CD4-positive, alpha-beta memory T cell (primary cell): ENCODE measurements at regions of chr6 and their contacts with region 1.

Region 1: GRCh38 chr6:119110601-119111548 is 32.4 kb upstream of the FAM184A start:
- DNase-seq: peak; percentile 46 to 67 (median 65)
- H3K4me3 ChIP-seq: no peak overlapping the region
- H3K4me3 Mint-ChIP-seq: peak overlapping the region in 2 of 8 donors; percentile 13 to 27
- H3K27ac ChIP-seq: no peak overlapping the region
- H3K27ac Mint-ChIP-seq: no peak overlapping the region
- H3K4me1 ChIP-seq: no peaks in the 10 kb centered on the region
- H3K4me1 Mint-ChIP-seq: peaks cover 7 to 12% (median 9%) of the 10 kb centered on the region in 4 donors
- H3K27me3 ChIP-seq: no peaks in the 10 kb centered on the region
- H3K27me3 Mint-ChIP-seq: peaks cover 0 to 1% of the 10 kb centered on the region in 2 donors

Region 2: GRCh38 chr6:118283766-118284165 is 827.1 kb before region 1 on chr6:
- CTCF ChIA-PET with region 1: interaction called, 37 read pairs
- POLR2A ChIA-PET with region 1: no interaction called
- intact Hi-C with region 1: loop called (anchors 1 kb)
- DNase-seq: peak; percentile 48 to 60 (median 56)
- H3K4me3 ChIP-seq: no peak overlapping the region
- H3K4me3 Mint-ChIP-seq: no peak overlapping the region
- H3K27ac ChIP-seq: no peak overlapping the region
- H3K27ac Mint-ChIP-seq: no peak overlapping the region
- H3K4me1 ChIP-seq: peaks cover 3% of the 10 kb centered on the region
- H3K4me1 Mint-ChIP-seq: peaks cover 0 to 1% (median 0%) of the 10 kb centered on the region in 4 donors
- H3K27me3 ChIP-seq: no peaks in the 10 kb centered on the region
- H3K27me3 Mint-ChIP-seq: peaks cover 5 to 7% of the 10 kb centered on the region in 2 donors

Region 3: DNA sequence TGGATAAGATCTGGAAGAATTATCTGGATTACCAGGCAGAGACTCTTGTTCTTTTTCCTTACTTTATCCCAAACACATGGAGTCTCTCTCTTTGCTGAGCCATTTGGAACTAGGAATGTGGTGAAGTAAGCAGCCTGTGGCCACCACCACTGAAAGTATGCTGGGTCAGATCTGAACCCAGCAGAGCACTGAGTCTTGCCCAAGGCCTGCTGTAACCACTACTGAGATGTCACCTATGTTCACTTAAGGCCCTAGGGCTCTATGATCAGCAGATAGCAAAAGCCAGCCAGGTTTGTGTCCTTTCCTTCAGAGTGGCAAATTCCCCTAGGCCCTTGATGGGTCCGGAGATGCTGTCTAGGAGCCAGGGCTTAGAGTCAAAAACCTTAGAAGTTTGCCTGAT is 666.1 kb before region 1 on chr6:
- CTCF ChIA-PET with region 1: no interaction called
- POLR2A ChIA-PET with region 1: no interaction called
- intact Hi-C with region 1: no loop called
- DNase-seq: no peak
- H3K4me3 ChIP-seq: no peak overlapping the region
- H3K4me3 Mint-ChIP-seq: no peak overlapping the region
- H3K27ac ChIP-seq: no peak overlapping the region
- H3K27ac Mint-ChIP-seq: no peak overlapping the region
- H3K4me1 ChIP-seq: no peaks in the 10 kb centered on the region
- H3K4me1 Mint-ChIP-seq: no peaks in the 10 kb centered on the region
- H3K27me3 ChIP-seq: no peaks in the 10 kb centered on the region
- H3K27me3 Mint-ChIP-seq: no peaks in the 10 kb centered on the region

Region 4: GRCh38 chr6:118800394-118801071 is 310.3 kb before region 1 on chr6:
- CTCF ChIA-PET with region 1: interaction called, 7 read pairs
- POLR2A ChIA-PET with region 1: no interaction called
- intact Hi-C with region 1: loop called (anchors 1 kb)
- DNase-seq: peak; percentile 87 to 90 (median 87)
- H3K4me3 ChIP-seq: no peak overlapping the region
- H3K4me3 Mint-ChIP-seq: peak overlapping the region; percentile 52 to 86 (median 65)
- H3K27ac ChIP-seq: peak overlapping the region; percentile 11
- H3K27ac Mint-ChIP-seq: peak overlapping the region; percentile 71 to 96 (median 93)
- H3K4me1 ChIP-seq: peaks cover 30% of the 10 kb centered on the region
- H3K4me1 Mint-ChIP-seq: peaks cover 29 to 53% (median 39%) of the 10 kb centered on the region in 4 donors
- H3K27me3 ChIP-seq: no peaks in the 10 kb centered on the region
- H3K27me3 Mint-ChIP-seq: no peaks in the 10 kb centered on the region

Region 5: DNA sequence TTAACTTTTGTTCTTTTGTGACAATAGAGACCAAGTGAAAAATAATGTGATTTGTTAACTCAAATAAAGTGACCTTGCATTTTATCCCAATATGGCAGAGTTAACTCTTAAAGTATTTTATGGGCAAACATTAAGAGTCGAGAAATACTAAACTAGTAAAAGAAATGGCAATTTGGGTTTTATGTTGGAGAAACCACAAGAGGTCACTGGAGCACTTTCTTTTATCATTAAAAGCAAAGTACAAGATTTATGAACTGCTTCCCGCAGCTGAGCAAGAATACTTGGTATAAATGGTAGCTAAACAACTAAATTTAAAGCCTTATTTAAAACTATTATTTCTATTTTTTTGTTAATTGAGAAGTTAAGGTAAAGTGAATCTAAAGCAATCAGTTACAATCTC is 142.5 kb before region 1 on chr6:
- CTCF ChIA-PET with region 1: interaction called, 245 read pairs
- POLR2A ChIA-PET with region 1: interaction called, 10 read pairs
- intact Hi-C with region 1: loop called (anchors 1 kb)
- DNase-seq: peak in 3 of 5 donors; percentile 2 to 9 (median 2)
- H3K4me3 ChIP-seq: no peak overlapping the region
- H3K4me3 Mint-ChIP-seq: no peak overlapping the region
- H3K27ac ChIP-seq: no peak overlapping the region
- H3K27ac Mint-ChIP-seq: no peak overlapping the region
- H3K4me1 ChIP-seq: no peaks in the 10 kb centered on the region
- H3K4me1 Mint-ChIP-seq: no peaks in the 10 kb centered on the region
- H3K27me3 ChIP-seq: no peaks in the 10 kb centered on the region
- H3K27me3 Mint-ChIP-seq: no peaks in the 10 kb centered on the region

Region 6: DNA sequence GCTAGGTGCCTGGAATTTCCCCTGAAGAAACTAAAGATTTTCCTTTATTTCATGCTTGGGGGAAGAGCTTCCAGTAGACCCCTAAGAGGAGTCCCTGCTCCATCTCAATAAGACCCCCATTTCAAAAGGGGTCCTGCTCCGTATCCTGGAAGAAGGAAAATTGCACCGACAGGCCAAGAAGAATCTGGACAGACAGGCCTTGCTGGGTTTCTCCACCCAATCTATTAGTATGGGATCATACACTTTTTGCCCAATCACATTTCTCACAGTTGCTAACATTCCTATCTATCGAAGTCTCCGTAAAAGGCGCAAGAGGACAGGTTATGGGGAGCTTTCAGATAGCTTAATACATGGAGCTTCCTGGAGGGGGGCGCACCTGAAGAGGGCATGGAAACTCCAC is 11.5 kb before region 1 on chr6:
- CTCF ChIA-PET with region 1: interaction called, 18 read pairs
- POLR2A ChIA-PET with region 1: no interaction called
- intact Hi-C with region 1: no loop called
- DNase-seq: no peak
- H3K4me3 ChIP-seq: no peak overlapping the region
- H3K4me3 Mint-ChIP-seq: no peak overlapping the region
- H3K27ac ChIP-seq: no peak overlapping the region
- H3K27ac Mint-ChIP-seq: no peak overlapping the region
- H3K4me1 ChIP-seq: no peaks in the 10 kb centered on the region
- H3K4me1 Mint-ChIP-seq: peaks cover 0 to 8% (median 4%) of the 10 kb centered on the region in 4 donors
- H3K27me3 ChIP-seq: no peaks in the 10 kb centered on the region
- H3K27me3 Mint-ChIP-seq: peaks cover 1 to 3% of the 10 kb centered on the region in 2 donors

Region 7: DNA sequence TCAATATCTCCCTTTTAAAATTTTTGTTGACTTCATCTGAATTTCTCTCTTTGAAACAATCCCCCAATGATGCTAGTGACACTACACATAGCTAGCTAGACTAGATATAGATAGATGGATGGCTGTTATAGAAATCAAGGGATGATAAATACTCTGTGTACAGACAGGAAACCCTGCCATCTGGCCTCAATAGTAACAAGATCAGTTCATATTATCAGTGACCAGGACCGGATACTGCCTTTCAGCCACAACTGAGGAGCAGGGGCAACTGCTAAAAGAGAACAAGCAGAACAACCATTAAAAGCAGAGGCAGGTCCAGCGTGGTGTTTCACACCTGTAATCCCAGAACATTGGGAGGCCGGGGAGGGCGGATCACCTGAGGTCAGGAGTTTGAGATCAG is 85.8 kb after region 1 on chr6:
- CTCF ChIA-PET with region 1: no interaction called
- POLR2A ChIA-PET with region 1: no interaction called
- intact Hi-C with region 1: no loop called
- DNase-seq: no peak
- H3K4me3 ChIP-seq: no peak overlapping the region
- H3K4me3 Mint-ChIP-seq: no peak overlapping the region
- H3K27ac ChIP-seq: no peak overlapping the region
- H3K27ac Mint-ChIP-seq: peak overlapping the region in 1 of 7 donors; percentile 45
- H3K4me1 ChIP-seq: no peaks in the 10 kb centered on the region
- H3K4me1 Mint-ChIP-seq: peaks cover 0 to 4% (median 0%) of the 10 kb centered on the region in 4 donors
- H3K27me3 ChIP-seq: no peaks in the 10 kb centered on the region
- H3K27me3 Mint-ChIP-seq: no peaks in the 10 kb centered on the region

Region 8: GRCh38 chr6:119586250-119586882 is 475.5 kb after region 1 on chr6:
- CTCF ChIA-PET with region 1: no interaction called
- POLR2A ChIA-PET with region 1: no interaction called
- intact Hi-C with region 1: no loop called
- DNase-seq: no peak
- H3K4me3 ChIP-seq: no peak overlapping the region
- H3K4me3 Mint-ChIP-seq: no peak overlapping the region
- H3K27ac ChIP-seq: no peak overlapping the region
- H3K27ac Mint-ChIP-seq: no peak overlapping the region
- H3K4me1 ChIP-seq: no peaks in the 10 kb centered on the region
- H3K4me1 Mint-ChIP-seq: no peaks in the 10 kb centered on the region
- H3K27me3 ChIP-seq: no peaks in the 10 kb centered on the region
- H3K27me3 Mint-ChIP-seq: peaks cover 0 to 1% of the 10 kb centered on the region in 2 donors